ENCODE measurements at regions of chr20 and their contacts with region 1.

Region 1: GRCh38 chr20:16040742-16041141 is 532.5 kb downstream of the KIF16B start:
- DNase-seq: peak; percentile 74
- H3K4me3 ChIP-seq: peak overlapping the region; percentile 2
- H3K27ac ChIP-seq: peak overlapping the region; percentile 95
- H3K4me1 ChIP-seq: peaks cover 65% of the 10 kb centered on the region
- CTCF ChIP-seq: no peak

Region 2: GRCh38 chr20:15857173-15857784 is 183.5 kb before region 1 on chr20:
- CTCF ChIA-PET with region 1: no interaction called
- POLR2A ChIA-PET with region 1: interaction called, 3 read pairs
- intact Hi-C with region 1: loop called (anchors 2 kb)
- DNase-seq: peak; percentile 84
- H3K4me3 ChIP-seq: peak overlapping the region; percentile 7
- H3K27ac ChIP-seq: peak overlapping the region; percentile 72
- H3K4me1 ChIP-seq: peaks cover 70% of the 10 kb centered on the region
- CTCF ChIP-seq: no peak

Region 3: DNA sequence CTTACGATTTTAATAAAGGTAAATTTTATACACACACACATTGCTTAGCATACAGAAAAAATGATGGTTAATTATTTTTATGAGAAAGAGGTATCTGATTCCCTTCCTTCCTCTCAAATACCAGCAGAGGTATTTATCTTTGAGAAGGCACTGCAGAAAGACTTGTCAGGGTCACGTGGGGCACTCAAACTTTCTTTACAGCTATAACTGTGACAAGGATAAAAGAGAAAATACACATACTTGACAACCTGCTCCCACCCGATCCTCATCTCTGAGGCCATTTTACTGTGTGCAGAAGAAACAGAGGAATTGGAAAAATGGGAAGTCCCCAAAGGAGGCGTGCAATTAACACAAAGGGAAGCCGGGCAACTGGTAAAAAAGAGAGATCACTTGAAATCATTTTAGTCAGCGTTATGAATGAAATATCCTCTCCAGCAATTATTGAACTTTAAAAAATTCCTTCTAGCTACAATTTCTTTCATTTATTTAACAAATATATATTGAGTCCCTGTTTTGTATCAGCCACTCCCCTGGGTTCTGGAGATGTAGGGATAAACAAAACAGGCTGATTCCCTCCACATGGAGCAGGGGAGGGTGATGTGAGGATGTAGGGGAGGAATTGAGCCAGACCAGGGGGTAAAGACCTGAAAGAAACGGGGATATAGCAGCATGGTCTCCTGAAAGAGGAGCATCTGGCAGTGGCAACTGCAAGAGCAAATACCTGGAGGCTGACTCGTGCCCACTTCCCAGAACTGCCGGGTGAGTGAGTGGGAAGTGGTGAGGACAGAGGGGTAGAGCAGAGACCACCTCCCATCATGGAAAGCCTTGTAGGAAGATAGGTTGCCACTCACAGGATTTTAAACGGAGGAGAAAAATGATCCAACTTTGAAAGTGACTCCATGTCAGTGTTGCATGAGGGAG is 22.2 kb after region 1 on chr20:
- CTCF ChIA-PET with region 1: no interaction called
- POLR2A ChIA-PET with region 1: interaction called, 17 read pairs
- intact Hi-C with region 1: no loop called
- DNase-seq: no peak
- H3K4me3 ChIP-seq: no peak overlapping the region
- H3K27ac ChIP-seq: no peak overlapping the region
- H3K4me1 ChIP-seq: peaks cover 30% of the 10 kb centered on the region
- CTCF ChIP-seq: no peak

Region 4: GRCh38 chr20:16158090-16158975 is 117.6 kb after region 1 on chr20:
- CTCF ChIA-PET with region 1: no interaction called
- POLR2A ChIA-PET with region 1: interaction called, 3 read pairs
- intact Hi-C with region 1: loop called (anchors 2 kb)
- DNase-seq: peak; percentile 60
- H3K4me3 ChIP-seq: peak overlapping the region; percentile 39
- H3K27ac ChIP-seq: peak overlapping the region; percentile 74
- H3K4me1 ChIP-seq: peaks cover 22% of the 10 kb centered on the region
- CTCF ChIP-seq: no peak